Naive thymus-derived CD4-positive, alpha-beta T cell (primary cell): ENCODE measurements at regions of chr2 and their contacts with region 1.

Region 1: DNA sequence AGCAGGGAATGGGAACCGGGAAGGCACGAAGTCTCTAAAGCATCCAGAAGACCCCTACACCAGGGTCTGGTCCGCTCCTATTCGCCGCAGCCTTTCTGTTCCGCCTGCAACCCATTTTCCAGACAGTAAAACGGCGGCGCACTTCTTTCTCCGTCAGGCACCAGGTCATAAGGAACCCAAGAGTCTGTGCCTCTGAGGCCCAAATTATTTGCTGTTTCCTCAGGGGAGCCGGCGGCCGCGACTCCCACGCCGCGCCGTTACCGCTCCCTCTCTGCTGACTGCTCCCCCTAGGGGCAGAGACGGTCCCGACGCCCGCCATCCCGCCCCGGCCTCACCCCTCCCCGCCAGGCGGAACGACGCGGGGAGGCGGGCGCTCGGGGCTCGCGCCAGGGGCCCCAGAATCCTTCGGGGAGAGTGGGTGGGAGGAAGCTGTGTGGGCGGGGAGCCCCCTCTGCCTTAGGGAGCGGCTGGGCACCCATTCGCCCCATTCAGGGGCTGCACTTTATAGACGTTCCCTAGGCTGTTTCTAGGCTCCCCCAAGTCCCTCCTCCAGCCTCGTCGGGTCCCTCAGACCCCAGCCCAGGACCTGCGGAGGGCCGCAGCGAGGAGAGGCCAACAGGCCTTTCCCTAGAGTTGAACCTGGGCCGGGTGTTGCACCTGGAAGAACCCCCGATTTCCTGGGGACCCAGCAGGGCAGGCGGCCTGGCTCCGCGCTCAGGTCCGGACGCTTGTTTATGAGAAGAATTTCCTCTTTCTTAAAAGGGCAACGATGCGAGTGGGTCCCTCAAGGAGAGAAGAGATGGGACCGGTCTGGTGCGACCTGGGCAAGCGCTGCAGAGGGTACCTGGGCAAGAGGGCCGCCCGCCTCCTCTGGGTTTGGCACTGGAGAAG is 3.6 kb upstream of the CTDSP1 start:
- DNase-seq: peak; percentile 91 to 98 (median 96)
- ATAC-seq: peak; percentile 83
- H3K4me3 ChIP-seq: peak overlapping the region; percentile 71
- H3K4me3 Mint-ChIP-seq: peak overlapping the region; percentile 85 to 99 (median 94)
- H3K27ac ChIP-seq: peak overlapping the region; percentile 86
- H3K27ac Mint-ChIP-seq: peak overlapping the region; percentile 96 to 100 (median 97)
- H3K4me1 ChIP-seq: peaks cover 29 to 31% of the 10 kb centered on the region in 2 donors
- H3K4me1 Mint-ChIP-seq: peaks cover 16 to 41% (median 39%) of the 10 kb centered on the region in 7 donors
- H3K27me3 ChIP-seq: no peaks in the 10 kb centered on the region
- H3K27me3 Mint-ChIP-seq: no peaks in the 10 kb centered on the region

Region 2: GRCh38 chr2:218269899-218270720 is 125.9 kb before region 1 on chr2 and contains the starts of genes AAMP and PNKD:
- CTCF ChIA-PET with region 1: interaction called, 6 read pairs
- POLR2A ChIA-PET with region 1: interaction called, 25 read pairs
- intact Hi-C with region 1: loop called (anchors 1 kb)
- DNase-seq: peak; percentile 99 to 100 (median 100)
- ATAC-seq: peak; percentile 95
- H3K4me3 ChIP-seq: peak within 1 kb of the TSS; percentile 96
- H3K4me3 Mint-ChIP-seq: peak within 1 kb of the TSS; percentile 84 to 99 (median 93)
- H3K27ac ChIP-seq: peak within 1 kb of the TSS; percentile 92
- H3K27ac Mint-ChIP-seq: peak within 1 kb of the TSS; percentile 82 to 95 (median 92)
- H3K4me1 ChIP-seq: peaks cover 27 to 30% of the 10 kb centered on the region in 2 donors
- H3K4me1 Mint-ChIP-seq: peaks cover 30 to 59% (median 51%) of the 10 kb centered on the region in 7 donors
- H3K27me3 ChIP-seq: no peaks in the 10 kb centered on the region
- H3K27me3 Mint-ChIP-seq: no peaks in the 10 kb centered on the region
- total RNA-seq, gene AAMP: 54.1 to 67.0 (median 61.2) TPM
- total RNA-seq, gene PNKD: 18.5 to 38.4 (median 25.2) TPM

Region 3: DNA sequence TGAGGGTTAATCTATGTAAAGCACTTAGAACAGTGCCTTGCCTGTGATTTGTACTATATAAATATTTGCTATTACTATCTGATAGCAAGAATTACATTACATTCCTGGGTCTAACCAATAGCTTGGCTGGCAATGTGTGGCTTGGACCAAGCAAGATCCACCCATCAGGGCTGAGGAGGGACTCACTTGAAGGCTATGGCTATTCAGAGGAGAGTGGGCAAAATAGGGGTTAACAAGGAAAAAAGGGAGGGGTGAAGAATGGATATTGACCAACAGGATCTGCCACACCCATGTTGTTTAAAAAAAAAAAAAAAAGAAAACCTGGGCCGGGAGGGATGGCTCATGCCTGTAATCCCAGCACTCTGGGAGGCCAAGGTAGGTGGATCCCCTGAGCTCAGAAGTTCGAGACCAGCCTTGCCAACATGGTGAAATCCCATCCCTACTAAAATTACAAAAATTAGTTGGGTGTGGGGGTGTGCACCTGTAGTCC is 83.7 kb before region 1 on chr2:
- CTCF ChIA-PET with region 1: interaction called, 4 read pairs
- POLR2A ChIA-PET with region 1: interaction called, 25 read pairs
- intact Hi-C with region 1: loop called in 1 of 2 experiments (anchors 1 kb)
- DNase-seq: no peak
- ATAC-seq: no peak
- H3K4me3 ChIP-seq: no peak overlapping the region
- H3K4me3 Mint-ChIP-seq: no peak overlapping the region
- H3K27ac ChIP-seq: no peak overlapping the region
- H3K27ac Mint-ChIP-seq: peak overlapping the region in 8 of 9 donors; percentile 36 to 88 (median 67)
- H3K4me1 ChIP-seq: peaks cover 15 to 17% of the 10 kb centered on the region in 2 donors
- H3K4me1 Mint-ChIP-seq: peaks cover 17 to 44% (median 40%) of the 10 kb centered on the region in 7 donors
- H3K27me3 ChIP-seq: no peaks in the 10 kb centered on the region
- H3K27me3 Mint-ChIP-seq: peaks cover 0 to 2% (median 0%) of the 10 kb centered on the region in 5 donors

Region 4: GRCh38 chr2:218466016-218466521 is 70.0 kb after region 1 on chr2:
- CTCF ChIA-PET with region 1: interaction called, 4 read pairs
- POLR2A ChIA-PET with region 1: interaction called, 6 read pairs
- intact Hi-C with region 1: loop called in 1 of 2 experiments (anchors 1 kb)
- DNase-seq: peak in 3 of 9 donors; percentile 9 to 24 (median 23)
- ATAC-seq: peak; percentile 45
- H3K4me3 ChIP-seq: no peak overlapping the region
- H3K4me3 Mint-ChIP-seq: no peak overlapping the region
- H3K27ac ChIP-seq: no peak overlapping the region
- H3K27ac Mint-ChIP-seq: peak overlapping the region in 2 of 9 donors; percentile 3 to 62
- H3K4me1 ChIP-seq: peaks cover 0 to 4% of the 10 kb centered on the region in 2 donors
- H3K4me1 Mint-ChIP-seq: peaks cover 5 to 10% (median 9%) of the 10 kb centered on the region in 7 donors
- H3K27me3 ChIP-seq: no peaks in the 10 kb centered on the region
- H3K27me3 Mint-ChIP-seq: no peaks in the 10 kb centered on the region

Region 5: DNA sequence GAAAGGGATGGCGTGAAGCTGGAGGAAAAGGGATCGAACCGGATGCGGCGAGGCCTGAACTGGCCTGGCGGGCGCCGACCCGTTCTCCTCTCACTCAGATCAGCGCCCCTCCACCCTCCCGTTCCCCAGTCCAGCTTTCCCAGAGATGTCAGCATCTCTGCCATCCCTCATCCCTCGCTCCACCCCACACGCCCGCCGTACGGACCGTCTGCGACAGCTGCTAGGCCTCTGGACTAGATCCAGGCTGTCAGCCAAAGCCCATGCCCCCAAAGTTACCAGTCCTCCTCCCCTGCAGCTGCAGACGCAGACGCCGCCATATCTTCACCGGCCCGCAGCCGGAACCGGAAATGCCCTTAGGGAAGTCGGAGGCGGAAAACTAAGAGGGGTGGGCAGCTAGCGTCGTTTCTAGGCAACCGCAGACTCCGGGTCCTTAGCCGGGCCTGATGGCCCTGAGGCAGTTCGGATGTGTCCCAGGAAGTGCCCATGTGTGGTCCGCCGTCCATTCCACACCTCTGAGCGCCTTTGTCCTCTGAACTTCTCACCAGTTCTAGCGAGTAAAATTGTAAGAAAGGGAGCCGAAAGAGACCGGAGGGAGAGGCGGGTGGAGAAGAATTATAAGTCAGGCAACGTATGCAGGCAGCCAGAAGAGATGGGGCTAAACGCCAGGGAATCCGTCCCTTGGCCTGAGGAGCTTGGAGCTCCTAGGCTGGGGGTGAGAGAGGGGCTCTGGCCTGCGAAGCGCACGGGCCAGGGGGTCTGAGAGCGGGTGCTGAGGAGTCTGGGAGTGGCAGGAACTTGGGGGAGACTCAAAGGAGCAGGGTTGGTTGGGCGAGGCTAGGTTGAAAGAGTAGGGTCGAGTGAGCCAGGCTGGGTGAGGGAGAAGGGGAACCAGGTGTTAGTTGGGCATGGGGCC is 275.9 kb after region 1 on chr2 and contains the starts of genes RNF25 and STK36:
- CTCF ChIA-PET with region 1: no interaction called
- POLR2A ChIA-PET with region 1: interaction called, 3 read pairs
- intact Hi-C with region 1: loop called in 1 of 2 experiments (anchors 1 kb)
- DNase-seq: peak; percentile 60 to 86 (median 79)
- ATAC-seq: peak; percentile 96
- H3K4me3 ChIP-seq: peak within 1 kb of the TSS; percentile 81
- H3K4me3 Mint-ChIP-seq: peak within 1 kb of the TSS; percentile 88 to 100 (median 98)
- H3K27ac ChIP-seq: peak within 1 kb of the TSS; percentile 84
- H3K27ac Mint-ChIP-seq: peak within 1 kb of the TSS; percentile 90 to 98 (median 96)
- H3K4me1 ChIP-seq: peaks cover 9 to 15% of the 10 kb centered on the region in 2 donors
- H3K4me1 Mint-ChIP-seq: peaks cover 14 to 29% (median 24%) of the 10 kb centered on the region in 7 donors
- H3K27me3 ChIP-seq: no peaks in the 10 kb centered on the region
- H3K27me3 Mint-ChIP-seq: no peaks in the 10 kb centered on the region
- total RNA-seq, gene RNF25: 12.6 to 33.4 (median 28.3) TPM
- total RNA-seq, gene STK36: 18.9 to 28.1 (median 19.7) TPM

Region 6: GRCh38 chr2:219177552-219178376 is 781.7 kb after region 1 on chr2 and contains the start of gene RETREG2:
- CTCF ChIA-PET with region 1: no interaction called
- POLR2A ChIA-PET with region 1: interaction called, 3 read pairs
- intact Hi-C with region 1: loop called in 1 of 2 experiments (anchors 1 kb)
- DNase-seq: peak; percentile 79 to 86 (median 83)
- ATAC-seq: peak; percentile 73
- H3K4me3 ChIP-seq: peak within 1 kb of the TSS; percentile 97
- H3K4me3 Mint-ChIP-seq: peak within 1 kb of the TSS; percentile 90 to 99 (median 96)
- H3K27ac ChIP-seq: peak within 1 kb of the TSS; percentile 96
- H3K27ac Mint-ChIP-seq: peak within 1 kb of the TSS; percentile 97 to 100 (median 99)
- H3K4me1 ChIP-seq: peaks cover 44 to 47% of the 10 kb centered on the region in 2 donors
- H3K4me1 Mint-ChIP-seq: peaks cover 48 to 80% (median 69%) of the 10 kb centered on the region in 7 donors
- H3K27me3 ChIP-seq: no peaks in the 10 kb centered on the region
- H3K27me3 Mint-ChIP-seq: no peaks in the 10 kb centered on the region
- total RNA-seq, gene RETREG2: 70.2 to 124 (median 90.9) TPM

Region 7: DNA sequence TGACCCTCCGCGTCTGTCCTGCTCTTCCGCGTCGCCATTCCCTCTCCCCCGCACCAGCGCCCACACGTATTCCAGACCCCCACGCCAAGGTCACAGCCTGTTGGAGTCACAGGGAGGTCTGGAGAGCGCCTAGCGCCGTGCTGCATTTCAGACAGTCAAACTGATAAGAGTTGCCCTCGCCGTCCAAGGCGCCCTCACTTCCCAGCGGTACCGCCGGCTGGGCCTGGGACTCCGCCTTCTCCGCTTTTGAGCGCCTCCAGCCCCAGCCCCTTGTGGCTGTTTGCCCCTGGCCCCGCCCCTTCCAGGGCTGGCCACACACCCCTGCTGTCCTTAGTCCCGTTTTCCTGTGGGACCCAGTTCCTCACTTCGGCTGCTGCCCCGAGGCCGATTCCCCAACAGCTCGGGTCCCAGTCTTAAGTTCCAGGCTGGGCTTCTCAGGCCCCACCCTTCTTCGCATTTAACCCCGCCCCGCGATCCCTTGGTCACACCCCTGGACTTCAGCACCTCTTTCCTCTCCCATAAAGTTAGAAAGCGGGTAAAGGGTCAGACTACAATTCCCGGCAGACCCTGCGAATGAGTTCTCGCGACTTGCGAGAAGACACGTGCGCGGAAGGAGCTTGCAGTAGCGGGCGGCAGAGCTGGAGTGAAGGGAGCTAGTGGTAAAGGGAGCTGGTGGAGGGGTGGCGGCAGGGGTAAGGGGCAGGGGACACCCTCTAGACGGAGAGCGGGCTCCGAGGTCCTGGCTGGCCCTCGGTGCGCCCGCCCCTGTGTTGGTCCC is 1102.4 kb after region 1 on chr2 and contains the start of gene GMPPA:
- CTCF ChIA-PET with region 1: no interaction called
- POLR2A ChIA-PET with region 1: no interaction called
- intact Hi-C with region 1: loop called in 1 of 2 experiments (anchors 5 kb)
- DNase-seq: peak; percentile 78 to 95 (median 90)
- ATAC-seq: peak; percentile 94
- H3K4me3 ChIP-seq: peak within 1 kb of the TSS; percentile 85
- H3K4me3 Mint-ChIP-seq: peak within 1 kb of the TSS; percentile 91 to 99 (median 96)
- H3K27ac ChIP-seq: peak within 1 kb of the TSS; percentile 79
- H3K27ac Mint-ChIP-seq: peak within 1 kb of the TSS; percentile 76 to 97 (median 86)
- H3K4me1 ChIP-seq: peaks cover 19 to 22% of the 10 kb centered on the region in 2 donors
- H3K4me1 Mint-ChIP-seq: peaks cover 26 to 42% (median 36%) of the 10 kb centered on the region in 7 donors
- H3K27me3 ChIP-seq: peaks cover 4 to 9% of the 10 kb centered on the region in 2 donors
- H3K27me3 Mint-ChIP-seq: peaks cover 28 to 47% (median 40%) of the 10 kb centered on the region in 5 donors
- total RNA-seq, gene GMPPA: 22.4 to 58.3 (median 37.2) TPM